Heart right ventricle (tissue), 16 donors: ENCODE measurements at regions of chr2 and their contacts with region 1.

Region 1: GRCh38 chr2:239429473-239430350 is 28.9 kb upstream of the HDAC4 start:
- DNase-seq: no peak
- ATAC-seq: peak in 4 of 8 donors; percentile 25 to 50 (median 36)
- H3K4me3 ChIP-seq: no peak overlapping the region
- H3K27ac ChIP-seq: no peak overlapping the region
- H3K4me1 ChIP-seq: no peaks in the 10 kb centered on the region
- H3K27me3 ChIP-seq: peaks cover 0 to 7% (median 0%) of the 10 kb centered on the region in 7 donors
- CTCF ChIP-seq: no peak

Region 2: DNA sequence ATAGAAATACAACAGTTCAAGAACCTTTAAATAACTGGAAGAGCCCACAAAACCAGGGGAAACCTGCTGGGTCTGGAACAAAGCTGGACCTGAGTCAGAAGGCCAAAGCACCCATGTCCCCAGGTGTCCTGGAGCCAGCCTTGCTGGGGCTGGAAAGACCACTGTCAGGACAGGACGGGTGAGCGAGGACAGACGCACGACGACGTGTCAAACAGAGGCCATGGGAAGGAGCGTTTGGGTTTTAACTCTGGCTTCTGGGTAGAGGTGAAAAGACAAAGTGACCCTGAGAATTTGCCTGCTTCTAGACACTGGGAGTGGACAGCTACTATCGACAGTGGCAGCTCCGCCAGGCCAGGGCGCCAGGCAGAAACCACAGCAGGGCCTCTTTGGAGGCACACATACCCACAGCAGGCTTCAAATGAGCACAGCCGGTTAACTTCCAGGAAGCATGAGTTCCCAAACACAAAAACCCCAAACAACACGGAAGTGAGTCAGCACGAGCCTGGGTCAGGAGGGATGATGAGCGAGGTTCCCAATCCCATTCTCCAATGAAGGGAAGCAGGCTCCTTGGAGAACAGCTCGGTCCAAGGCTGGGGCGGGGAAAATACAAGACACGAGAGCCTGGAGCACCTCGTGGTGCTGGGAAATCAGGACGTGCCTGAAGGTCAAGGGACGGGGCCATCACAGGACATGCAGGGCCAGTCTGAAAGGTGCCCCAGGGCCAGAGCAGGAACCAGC is 373.8 kb before region 1 on chr2:
- intact Hi-C with region 1: loop called in 1 of 10 experiments (anchors 10 kb)
- DNase-seq: no peak
- ATAC-seq: no peak
- H3K4me3 ChIP-seq: no peak overlapping the region
- H3K27ac ChIP-seq: no peak overlapping the region
- H3K4me1 ChIP-seq: no peaks in the 10 kb centered on the region
- H3K27me3 ChIP-seq: no peaks in the 10 kb centered on the region
- CTCF ChIP-seq: no peak